HepG2 (cell line): ENCODE measurements at regions of chr9 and their contacts with region 1.

Region 1: GRCh38 chr9:13351778-13352386 is 72.4 kb upstream of the MPDZ start:
- DNase-seq: peak; percentile 23
- ATAC-seq: no peak
- H3K4me3 ChIP-seq: no peak overlapping the region
- H3K27ac ChIP-seq: no peak overlapping the region
- H3K4me1 ChIP-seq: no peaks in the 10 kb centered on the region
- H3K27me3 ChIP-seq: no peaks in the 10 kb centered on the region
- CTCF ChIP-seq: peak; percentile 49; the same call in 1 of the 2 replicates
- EP300 ChIP-seq: no peak
- POLR2A ChIP-seq: no peak
- RAD21 ChIP-seq: no peak

Region 2: DNA sequence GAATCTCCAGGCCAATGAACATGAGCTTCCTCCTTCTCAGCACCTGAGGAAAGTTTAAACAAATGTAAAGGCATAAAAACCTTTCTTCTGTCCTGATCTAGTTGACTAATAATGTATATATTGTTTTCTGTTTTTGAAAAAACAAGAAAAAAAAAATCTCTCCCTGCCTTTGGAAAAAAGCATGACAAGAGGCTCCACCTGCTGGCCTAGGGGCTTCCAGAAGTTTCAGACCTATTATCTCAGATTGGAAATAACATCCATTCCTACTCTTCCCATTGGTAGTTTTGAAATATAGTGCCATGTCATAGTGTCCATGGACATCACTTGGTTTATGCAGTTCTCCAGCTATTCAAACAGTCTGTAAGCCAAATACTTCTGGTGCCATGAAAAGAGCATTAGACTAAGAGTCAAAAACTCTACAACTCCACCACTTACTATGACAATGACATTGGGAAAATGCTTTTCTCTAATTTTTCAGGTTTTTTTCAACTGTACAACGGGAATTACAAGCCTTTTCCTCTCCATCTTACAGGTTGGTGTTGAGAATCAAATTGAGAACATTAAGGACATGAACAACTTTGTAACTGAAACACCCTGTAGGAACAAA is 337.2 kb after region 1 on chr9:
- CTCF ChIA-PET with region 1: no interaction called
- POLR2A ChIA-PET with region 1: no interaction called
- in situ Hi-C with region 1: no loop called
- intact Hi-C with region 1: loop called (anchors 2 kb)
- DNase-seq: no peak
- ATAC-seq: no peak
- H3K4me3 ChIP-seq: no peak overlapping the region
- H3K27ac ChIP-seq: no peak overlapping the region
- H3K4me1 ChIP-seq: no peaks in the 10 kb centered on the region
- H3K27me3 ChIP-seq: no peaks in the 10 kb centered on the region
- CTCF ChIP-seq: 0 out of 2 replicates have a peak, but pooled peaks have one; percentile 11
- EP300 ChIP-seq: no peak
- POLR2A ChIP-seq: no peak
- RAD21 ChIP-seq: no peak

Region 3: DNA sequence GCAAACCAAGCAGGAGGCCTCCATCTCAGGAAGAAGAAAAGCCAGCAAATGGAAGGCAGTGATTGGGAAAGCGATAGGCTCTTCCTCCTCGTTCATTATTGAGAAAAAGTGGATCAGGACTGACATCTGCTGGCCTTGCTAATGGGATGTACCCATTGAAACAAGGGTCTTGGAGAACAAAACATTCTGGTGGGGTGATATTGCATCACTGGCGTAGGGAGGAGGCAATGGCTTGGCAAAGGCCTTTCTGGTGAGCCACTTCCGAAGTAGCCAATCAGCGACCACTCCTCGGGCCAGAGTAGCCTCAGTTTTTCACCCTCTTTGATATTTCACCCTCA is 1048.7 kb after region 1 on chr9:
- CTCF ChIA-PET with region 1: no interaction called
- POLR2A ChIA-PET with region 1: no interaction called
- in situ Hi-C with region 1: no loop called
- intact Hi-C with region 1: loop called (anchors 2 kb)
- DNase-seq: peak; percentile 35
- ATAC-seq: peak; percentile 61
- H3K4me3 ChIP-seq: no peak overlapping the region
- H3K27ac ChIP-seq: no peak overlapping the region
- H3K4me1 ChIP-seq: no peaks in the 10 kb centered on the region
- H3K27me3 ChIP-seq: no peaks in the 10 kb centered on the region; a peak in 1 of 5 replicates
- CTCF ChIP-seq: peak; percentile 47
- EP300 ChIP-seq: no peak
- POLR2A ChIP-seq: no peak
- RAD21 ChIP-seq: no peak

Region 4: DNA sequence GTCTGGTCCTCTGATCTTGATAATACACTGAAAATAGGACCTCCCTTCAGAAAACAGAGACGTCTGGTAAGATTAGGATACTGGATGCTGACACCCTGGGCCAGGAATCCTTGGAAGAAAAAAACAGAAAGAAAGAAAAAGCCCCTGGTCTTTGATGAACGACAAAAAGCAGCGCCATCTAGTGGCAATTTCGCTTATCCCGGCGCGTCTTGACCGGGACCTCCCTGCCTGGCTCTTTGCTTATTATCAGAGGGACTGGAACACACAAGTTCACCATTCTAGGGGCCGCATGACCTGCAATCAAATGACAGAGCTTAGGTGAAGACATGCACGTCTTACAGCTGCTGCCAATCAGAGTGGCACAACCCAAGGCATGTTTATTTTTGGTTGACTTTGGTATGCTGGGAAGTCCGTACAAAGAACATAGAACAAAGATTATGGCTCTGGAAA is 1076.9 kb after region 1 on chr9:
- CTCF ChIA-PET with region 1: no interaction called
- POLR2A ChIA-PET with region 1: no interaction called
- in situ Hi-C with region 1: no loop called
- intact Hi-C with region 1: loop called (anchors 5 kb)
- DNase-seq: peak; percentile 25
- ATAC-seq: peak; percentile 94
- H3K4me3 ChIP-seq: no peak overlapping the region
- H3K27ac ChIP-seq: no peak overlapping the region
- H3K4me1 ChIP-seq: no peaks in the 10 kb centered on the region
- H3K27me3 ChIP-seq: peaks cover 0 to 2% of the 10 kb centered on the region in 2 experiments; a peak in 1 of 5 replicates
- CTCF ChIP-seq: peak; percentile 70
- EP300 ChIP-seq: no peak
- POLR2A ChIP-seq: no peak
- RAD21 ChIP-seq: no peak